Calu3 (cell line): ENCODE measurements at regions of chr14 and their contacts with region 1.

Region 1: GRCh38 chr14:49862089-49862673 is 9.6 kb upstream of the NEMF start:
- DNase-seq: peak; percentile 75
- H3K4me3 Mint-ChIP-seq: no peak overlapping the region
- H3K27ac Mint-ChIP-seq: no peak overlapping the region
- H3K4me1 Mint-ChIP-seq: peaks cover 11% of the 10 kb centered on the region
- H3K27me3 Mint-ChIP-seq: peaks cover 7% of the 10 kb centered on the region
- CTCF ChIP-seq: peak; percentile 100

Region 2: DNA sequence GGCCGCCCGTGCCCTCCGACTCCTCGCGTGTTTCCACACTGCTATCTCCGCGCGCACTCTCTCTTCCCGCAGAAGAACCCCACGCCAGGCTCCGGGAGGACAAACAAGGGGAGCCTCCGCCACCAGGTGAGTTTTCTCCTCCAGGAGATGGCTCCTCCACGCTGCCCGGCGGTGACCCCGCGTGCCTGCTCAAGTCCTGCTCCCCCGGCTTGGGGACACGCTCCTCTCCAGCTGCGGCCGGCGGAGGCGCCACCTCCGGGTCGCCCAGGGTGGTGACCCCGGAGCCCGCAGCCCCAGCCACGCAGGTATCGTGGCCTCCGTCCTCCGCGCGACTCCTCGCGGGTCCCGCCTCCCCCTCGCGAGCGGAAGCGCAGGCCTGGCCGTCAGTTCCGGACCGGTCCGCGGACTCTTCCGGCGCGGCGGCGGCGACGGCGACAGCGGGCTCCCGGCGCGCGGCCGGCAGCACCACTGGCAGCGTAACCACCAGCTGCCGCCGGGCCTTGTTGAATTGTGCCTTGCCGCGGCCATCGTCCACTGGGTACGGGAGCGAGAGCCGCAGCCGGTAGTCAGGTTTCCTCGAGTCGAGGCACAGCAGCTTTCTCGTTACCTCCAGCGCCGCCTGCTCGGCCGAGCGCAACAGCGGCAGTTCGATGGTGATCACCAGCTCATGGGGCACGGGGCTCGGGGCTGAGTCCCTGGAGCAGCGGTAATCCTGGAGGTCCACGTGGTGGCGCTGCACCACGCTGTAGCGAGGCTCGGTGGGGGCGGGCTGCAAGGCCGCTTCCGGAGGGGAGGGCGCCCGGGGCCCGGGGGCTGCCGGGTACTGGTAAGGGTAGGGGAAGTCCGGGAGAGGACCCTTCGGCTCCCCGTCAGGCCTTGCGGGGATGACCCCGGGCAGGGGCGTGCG is 228.3 kb before region 1 on chr14:
- CTCF ChIA-PET with region 1: interaction called, 10 read pairs
- intact Hi-C with region 1: no loop called
- DNase-seq: peak; percentile 95
- H3K4me3 Mint-ChIP-seq: peak overlapping the region; percentile 97
- H3K27ac Mint-ChIP-seq: peak overlapping the region; percentile 85
- H3K4me1 Mint-ChIP-seq: peaks cover 18% of the 10 kb centered on the region
- H3K27me3 Mint-ChIP-seq: no peaks in the 10 kb centered on the region
- CTCF ChIP-seq: peak; percentile 67

Region 3: GRCh38 chr14:50003213-50004031 is 141.2 kb after region 1 on chr14:
- CTCF ChIA-PET with region 1: interaction called, 23 read pairs
- intact Hi-C with region 1: loop called (anchors 5 kb)
- DNase-seq: peak; percentile 86
- H3K4me3 Mint-ChIP-seq: peak overlapping the region; percentile 69
- H3K27ac Mint-ChIP-seq: peak overlapping the region; percentile 99
- H3K4me1 Mint-ChIP-seq: peaks cover 66% of the 10 kb centered on the region
- H3K27me3 Mint-ChIP-seq: no peaks in the 10 kb centered on the region
- CTCF ChIP-seq: no peak

Region 4: GRCh38 chr14:50008562-50009350 is 146.6 kb after region 1 on chr14:
- CTCF ChIA-PET with region 1: interaction called, 23 read pairs
- intact Hi-C with region 1: loop called (anchors 5 kb)
- DNase-seq: peak; percentile 51
- H3K4me3 Mint-ChIP-seq: peak overlapping the region; percentile 47
- H3K27ac Mint-ChIP-seq: peak overlapping the region; percentile 93
- H3K4me1 Mint-ChIP-seq: peaks cover 58% of the 10 kb centered on the region
- H3K27me3 Mint-ChIP-seq: no peaks in the 10 kb centered on the region
- CTCF ChIP-seq: no peak

Region 5: GRCh38 chr14:50116181-50116956 is 254.2 kb after region 1 on chr14 and contains the start of gene VCPKMT:
- CTCF ChIA-PET with region 1: interaction called, 13 read pairs
- intact Hi-C with region 1: no loop called
- DNase-seq: peak; percentile 95
- H3K4me3 Mint-ChIP-seq: peak within 1 kb of the TSS; percentile 90
- H3K27ac Mint-ChIP-seq: peak within 1 kb of the TSS; percentile 90
- H3K4me1 Mint-ChIP-seq: peaks cover 8% of the 10 kb centered on the region
- H3K27me3 Mint-ChIP-seq: no peaks in the 10 kb centered on the region
- CTCF ChIP-seq: no peak
- total RNA-seq, gene VCPKMT: 7.1 and 8.8 TPM in 2 replicates

Region 6: DNA sequence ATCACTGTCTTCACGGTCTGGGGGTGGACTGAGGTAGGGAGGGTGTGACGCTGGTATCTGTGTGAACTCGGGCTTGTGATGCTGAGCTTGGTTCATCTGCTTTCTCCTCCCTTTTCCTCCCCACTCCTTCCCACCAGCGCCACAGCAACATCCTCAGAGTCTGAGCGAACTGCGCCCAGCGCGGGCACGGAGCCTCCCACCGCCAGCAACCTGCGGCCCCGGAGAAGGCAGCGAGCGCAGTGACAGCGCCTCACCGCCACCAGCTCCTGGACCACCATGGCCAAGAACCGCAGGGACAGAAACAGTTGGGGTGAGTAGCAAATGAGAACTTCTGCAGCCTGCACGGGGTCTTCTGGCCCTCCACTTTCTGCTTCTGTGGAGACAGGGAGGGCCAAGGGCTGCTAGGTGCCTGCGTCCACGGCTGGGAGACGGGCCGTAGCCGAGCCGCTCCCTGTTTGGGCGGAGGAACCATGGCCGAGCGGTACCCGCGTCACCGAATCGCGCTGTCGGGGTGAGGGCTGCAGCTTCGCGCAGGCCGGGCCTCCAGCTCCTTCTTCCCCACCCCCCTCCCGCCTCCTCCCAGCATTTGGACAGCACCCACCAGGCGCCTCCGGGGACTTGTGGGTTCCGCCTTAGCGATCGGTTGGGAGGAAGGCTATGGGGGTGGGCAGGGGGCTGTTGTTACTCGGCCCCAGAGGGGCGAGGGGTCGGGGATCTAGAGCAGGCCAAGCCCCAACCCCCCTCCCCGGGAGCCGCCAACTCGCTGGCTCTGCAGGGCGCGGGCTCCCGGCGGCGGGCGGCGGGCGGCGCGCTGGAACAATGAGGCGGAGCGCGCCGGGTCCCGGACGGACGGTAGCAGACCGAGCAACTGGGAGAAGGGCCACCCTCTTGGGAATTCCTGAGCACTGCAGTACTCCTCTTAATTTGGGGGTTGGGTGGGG is 698.1 kb after region 1 on chr14 and contains the start of gene ATL1:
- CTCF ChIA-PET with region 1: no interaction called
- intact Hi-C with region 1: no loop called
- DNase-seq: peak; percentile 51
- H3K4me3 Mint-ChIP-seq: peak within 1 kb of the TSS; percentile 70
- H3K27ac Mint-ChIP-seq: no peak within 1 kb of the TSS
- H3K4me1 Mint-ChIP-seq: no peaks in the 10 kb centered on the region
- H3K27me3 Mint-ChIP-seq: peaks cover 47% of the 10 kb centered on the region
- CTCF ChIP-seq: no peak
- total RNA-seq, gene ATL1: 3.1 and 4.9 TPM in 2 replicates